ENCODE measurements at regions of chr10 and their contacts with region 1.

Region 1: GRCh38 chr10:62732841-62733653 is 71.5 kb upstream of the ADO start:
- DNase-seq: peak; percentile 71
- H3K4me3 Mint-ChIP-seq: no peak overlapping the region
- H3K27ac Mint-ChIP-seq: no peak overlapping the region
- H3K4me1 Mint-ChIP-seq: peaks cover 19% of the 10 kb centered on the region
- H3K27me3 Mint-ChIP-seq: peaks cover 3% of the 10 kb centered on the region

Region 2: DNA sequence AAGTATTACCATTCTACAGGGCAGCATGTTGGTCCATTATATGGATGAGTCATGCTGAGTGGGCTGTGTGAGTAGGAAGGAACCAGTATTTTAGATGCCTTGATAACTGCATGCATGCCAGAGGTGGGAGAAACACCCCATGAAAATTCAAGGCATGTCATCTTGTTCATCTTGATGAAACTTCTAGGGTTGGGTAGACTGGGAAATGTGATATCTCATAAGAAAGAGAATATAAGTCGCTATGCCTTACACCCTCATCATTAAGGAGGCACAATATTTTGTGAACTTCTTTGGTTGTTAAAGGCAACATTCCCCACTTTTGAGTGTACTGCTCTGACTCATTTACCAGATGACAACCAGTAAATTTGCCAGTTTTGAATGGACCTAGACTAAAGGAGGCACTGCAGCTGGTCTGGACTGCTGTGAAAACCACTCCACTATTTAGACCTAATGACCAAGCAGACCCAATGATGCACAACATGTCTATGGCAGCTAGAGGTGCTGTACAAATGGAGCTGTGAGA is 310.9 kb before region 1 on chr10:
- CTCF ChIA-PET with region 1: no interaction called
- POLR2A ChIA-PET with region 1: no interaction called
- intact Hi-C with region 1: loop called (anchors 5 kb)
- DNase-seq: no peak
- H3K4me3 Mint-ChIP-seq: no peak overlapping the region
- H3K27ac Mint-ChIP-seq: no peak overlapping the region
- H3K4me1 Mint-ChIP-seq: peaks cover 29% of the 10 kb centered on the region
- H3K27me3 Mint-ChIP-seq: peaks cover 2% of the 10 kb centered on the region

Region 3: DNA sequence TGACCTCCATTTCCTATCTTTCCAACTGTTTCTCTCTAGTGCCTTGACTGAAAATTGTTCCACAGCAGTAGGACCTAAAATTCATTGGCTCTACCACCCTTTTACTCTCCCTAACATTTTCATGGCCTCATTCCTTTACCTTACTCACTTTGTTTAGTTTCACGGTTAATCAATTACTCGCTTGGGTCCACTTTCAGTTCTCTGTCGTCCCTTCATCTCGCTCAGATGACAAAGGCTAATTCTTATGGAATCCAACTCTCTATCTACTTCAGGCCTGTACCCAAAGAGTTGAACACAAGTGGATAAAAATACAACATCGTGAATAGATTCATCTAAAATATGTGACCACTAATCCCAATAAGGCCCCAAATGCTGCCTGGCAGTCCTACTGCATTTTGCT is 14.5 kb before region 1 on chr10:
- CTCF ChIA-PET with region 1: no interaction called
- POLR2A ChIA-PET with region 1: no interaction called
- intact Hi-C with region 1: no loop called
- DNase-seq: no peak
- H3K4me3 Mint-ChIP-seq: no peak overlapping the region
- H3K27ac Mint-ChIP-seq: no peak overlapping the region
- H3K4me1 Mint-ChIP-seq: peaks cover 11% of the 10 kb centered on the region
- H3K27me3 Mint-ChIP-seq: peaks cover 2% of the 10 kb centered on the region

Region 4: GRCh38 chr10:62748386-62748785 is 15.3 kb after region 1 on chr10:
- CTCF ChIA-PET with region 1: interaction called, 18 read pairs
- POLR2A ChIA-PET with region 1: interaction called, 11 read pairs
- intact Hi-C with region 1: loop called (anchors 1 kb)
- DNase-seq: no peak
- H3K4me3 Mint-ChIP-seq: peak overlapping the region; percentile 12
- H3K27ac Mint-ChIP-seq: peak overlapping the region; percentile 59
- H3K4me1 Mint-ChIP-seq: peaks cover 25% of the 10 kb centered on the region
- H3K27me3 Mint-ChIP-seq: no peaks in the 10 kb centered on the region

Region 5: GRCh38 chr10:62794306-62794705 is 61.3 kb after region 1 on chr10:
- CTCF ChIA-PET with region 1: no interaction called
- POLR2A ChIA-PET with region 1: no interaction called
- intact Hi-C with region 1: no loop called
- DNase-seq: no peak
- H3K4me3 Mint-ChIP-seq: no peak overlapping the region
- H3K27ac Mint-ChIP-seq: no peak overlapping the region
- H3K4me1 Mint-ChIP-seq: no peaks in the 10 kb centered on the region
- H3K27me3 Mint-ChIP-seq: peaks cover 15% of the 10 kb centered on the region

Region 6: GRCh38 chr10:62811159-62811875 is 78.3 kb after region 1 on chr10:
- CTCF ChIA-PET with region 1: interaction called, 16 read pairs
- POLR2A ChIA-PET with region 1: interaction called, 17 read pairs
- intact Hi-C with region 1: loop called (anchors 1 kb)
- DNase-seq: peak; percentile 94
- H3K4me3 Mint-ChIP-seq: peak overlapping the region; percentile 88
- H3K27ac Mint-ChIP-seq: peak overlapping the region; percentile 88
- H3K4me1 Mint-ChIP-seq: peaks cover 79% of the 10 kb centered on the region
- H3K27me3 Mint-ChIP-seq: no peaks in the 10 kb centered on the region

Region 7: GRCh38 chr10:62858364-62858763 is 125.3 kb after region 1 on chr10:
- CTCF ChIA-PET with region 1: no interaction called
- POLR2A ChIA-PET with region 1: no interaction called
- intact Hi-C with region 1: loop called (anchors 1 kb)
- DNase-seq: no peak
- H3K4me3 Mint-ChIP-seq: no peak overlapping the region
- H3K27ac Mint-ChIP-seq: no peak overlapping the region
- H3K4me1 Mint-ChIP-seq: peaks cover 61% of the 10 kb centered on the region
- H3K27me3 Mint-ChIP-seq: peaks cover 9% of the 10 kb centered on the region

Region 8: GRCh38 chr10:63227207-63227915 is 494.3 kb after region 1 on chr10:
- CTCF ChIA-PET with region 1: no interaction called
- POLR2A ChIA-PET with region 1: no interaction called
- intact Hi-C with region 1: loop called (anchors 5 kb)
- DNase-seq: no peak
- H3K4me3 Mint-ChIP-seq: peak overlapping the region; percentile 47
- H3K27ac Mint-ChIP-seq: peak overlapping the region; percentile 80
- H3K4me1 Mint-ChIP-seq: peaks cover 50% of the 10 kb centered on the region
- H3K27me3 Mint-ChIP-seq: no peaks in the 10 kb centered on the region